AG04449 (cell line): ENCODE measurements at regions of chr3 and their contacts with region 1.

Region 1: DNA sequence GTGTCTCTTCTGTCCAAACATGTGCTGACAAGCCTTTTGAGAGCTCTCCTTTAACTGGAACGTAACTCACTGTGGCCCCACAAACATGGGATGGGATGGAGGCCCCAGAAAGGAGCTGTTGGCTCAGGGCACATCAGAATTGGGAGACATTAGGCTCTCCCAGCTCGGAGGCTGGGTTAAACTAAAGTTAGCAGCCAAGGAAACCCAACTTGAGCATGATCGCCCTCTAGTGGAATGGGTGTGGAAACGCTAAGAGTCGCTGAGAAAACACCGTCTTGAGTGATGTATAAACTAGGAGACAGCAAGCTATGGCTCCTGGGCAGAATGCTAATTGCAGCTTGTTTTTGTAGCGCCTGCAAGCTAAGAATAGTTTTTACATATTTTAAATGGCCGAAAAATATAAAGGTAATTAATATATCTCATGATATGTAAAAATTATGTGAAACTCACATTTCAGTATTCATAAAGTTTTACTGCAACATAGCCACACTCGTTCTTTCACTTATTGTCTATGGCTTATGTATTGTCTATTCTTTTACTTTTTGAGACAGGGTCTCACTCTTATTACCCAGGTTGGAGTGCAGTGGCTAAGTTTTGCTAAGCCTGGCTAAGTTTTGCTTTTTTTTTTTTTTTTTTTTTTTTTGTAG is 138.8 kb upstream of the HACD2 start:
- DNase-seq: no peak
- H3K4me3 ChIP-seq: no peak overlapping the region
- CTCF ChIP-seq: peak; percentile 84

Region 2: DNA sequence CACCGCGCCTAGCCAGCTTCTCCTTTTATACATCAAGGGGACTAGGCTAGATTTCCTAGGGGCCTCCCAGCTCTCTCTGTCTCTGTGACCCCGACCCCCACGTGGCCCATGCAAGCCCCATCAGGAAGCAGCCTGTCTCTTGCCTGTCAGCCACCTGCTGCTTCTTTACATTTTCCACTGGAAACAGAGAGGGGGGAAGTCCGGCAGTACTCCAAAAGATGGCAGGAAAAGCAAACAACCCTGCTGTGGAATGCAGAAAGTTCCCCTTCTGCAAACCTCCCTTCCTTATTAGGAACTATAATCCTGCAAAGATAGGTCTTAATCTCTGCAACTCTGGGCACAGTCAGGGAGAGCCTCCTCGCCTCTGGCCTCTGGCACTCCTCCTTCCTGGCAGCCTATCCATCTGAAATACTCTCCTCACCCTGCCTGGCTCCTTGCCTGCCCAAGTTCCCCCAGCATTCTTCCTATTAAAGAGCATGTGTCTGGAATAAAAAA is 91.4 kb before region 1 on chr3:
- CTCF ChIA-PET with region 1: interaction called, 16 read pairs
- POLR2A ChIA-PET with region 1: no interaction called
- DNase-seq: peak; percentile 68
- H3K4me3 ChIP-seq: no peak overlapping the region
- CTCF ChIP-seq: no peak

Region 3: DNA sequence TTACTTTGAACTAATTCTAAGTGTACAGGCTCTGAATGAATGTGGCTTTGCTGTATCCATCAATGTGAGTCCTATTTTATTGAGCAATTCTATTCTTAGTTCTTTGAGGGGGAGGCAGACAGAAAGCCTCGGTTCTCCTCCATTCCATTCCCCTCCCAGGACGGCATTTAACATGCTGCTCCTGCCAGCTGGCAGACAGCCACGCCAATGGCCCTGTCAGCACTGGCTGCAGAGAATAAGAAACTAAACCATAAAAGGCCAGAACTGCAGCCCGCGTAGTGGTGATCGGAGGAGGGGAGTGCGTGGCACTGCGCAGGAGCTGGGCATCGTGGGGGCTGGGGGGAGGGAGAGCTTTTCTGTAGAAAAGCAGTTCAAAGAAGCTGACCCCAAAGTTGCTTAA is 62.7 kb before region 1 on chr3:
- CTCF ChIA-PET with region 1: interaction called, 512 read pairs
- POLR2A ChIA-PET with region 1: no interaction called
- DNase-seq: peak; percentile 98
- H3K4me3 ChIP-seq: no peak overlapping the region
- CTCF ChIP-seq: no peak

Region 4: GRCh38 chr3:123712077-123712860 is 11.4 kb before region 1 on chr3:
- CTCF ChIA-PET with region 1: interaction called, 71 read pairs
- POLR2A ChIA-PET with region 1: no interaction called
- DNase-seq: no peak
- H3K4me3 ChIP-seq: no peak overlapping the region
- CTCF ChIP-seq: no peak

Region 5: GRCh38 chr3:123750659-123751420 is 27.2 kb after region 1 on chr3:
- CTCF ChIA-PET with region 1: interaction called, 32 read pairs
- POLR2A ChIA-PET with region 1: interaction called, 3 read pairs
- DNase-seq: no peak
- H3K4me3 ChIP-seq: no peak overlapping the region
- CTCF ChIP-seq: peak; percentile 17

Region 6: DNA sequence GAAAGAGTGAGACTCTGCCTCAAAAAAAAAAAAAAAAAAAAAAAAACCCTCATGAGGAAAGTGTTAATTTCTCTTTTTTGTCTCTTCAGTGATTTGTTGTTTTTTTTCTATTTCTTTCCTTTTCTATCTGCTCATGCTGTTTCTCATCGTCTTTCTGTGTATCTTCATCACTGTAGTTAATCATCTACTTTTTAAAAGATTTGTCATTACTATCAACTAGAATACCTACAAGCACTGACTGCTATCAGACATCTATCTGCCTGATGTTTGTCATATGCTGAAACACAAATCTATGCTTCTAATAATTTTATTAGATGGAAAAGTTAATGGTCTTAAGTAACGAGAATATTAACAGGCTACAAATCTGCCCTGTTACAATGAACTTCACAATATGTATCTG is 210.6 kb after region 1 on chr3:
- CTCF ChIA-PET with region 1: no interaction called
- POLR2A ChIA-PET with region 1: no interaction called
- DNase-seq: no peak
- H3K4me3 ChIP-seq: no peak overlapping the region
- CTCF ChIP-seq: no peak